Ovary (tissue), 10 donors: ENCODE measurements at regions of chr3 and their contacts with region 1.

Region 1: GRCh38 chr3:149512209-149512782 is 37.8 kb downstream of the TM4SF4 start:
- DNase-seq: peak; percentile 37 to 77 (median 62)
- H3K4me3 ChIP-seq: no peak overlapping the region
- H3K27ac ChIP-seq: no peak overlapping the region
- H3K4me1 ChIP-seq: peaks cover 5% of the 10 kb centered on the region
- H3K27me3 ChIP-seq: no peaks in the 10 kb centered on the region
- CTCF ChIP-seq: peak; percentile 63 to 80 (median 74)
- EP300 ChIP-seq: no peak
- POLR2A ChIP-seq: no peak

Region 2: DNA sequence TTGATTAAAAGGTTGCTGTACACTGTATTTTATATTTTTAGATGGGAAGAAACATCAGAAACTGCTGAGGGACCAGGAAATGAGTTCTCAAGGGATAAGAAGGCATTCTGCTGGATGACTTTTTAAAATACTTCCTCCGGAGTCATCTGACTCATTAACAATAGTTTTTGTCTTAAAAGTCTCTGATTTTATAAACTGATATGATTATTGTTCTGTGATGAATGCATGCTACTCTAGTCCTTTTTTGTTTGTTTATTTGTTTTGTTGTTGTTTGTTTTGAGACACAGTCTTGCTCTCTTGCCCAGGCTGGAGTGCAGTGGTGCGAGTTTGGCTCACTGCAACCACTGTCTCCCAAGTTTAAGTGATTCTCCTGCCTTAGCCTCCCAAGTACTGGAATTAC is 407.8 kb before region 1 on chr3:
- intact Hi-C with region 1: no loop called
- DNase-seq: no peak
- H3K4me3 ChIP-seq: no peak overlapping the region
- H3K27ac ChIP-seq: no peak overlapping the region
- H3K4me1 ChIP-seq: no peaks in the 10 kb centered on the region
- H3K27me3 ChIP-seq: no peaks in the 10 kb centered on the region
- CTCF ChIP-seq: no peak
- EP300 ChIP-seq: no peak
- POLR2A ChIP-seq: no peak

Region 3: DNA sequence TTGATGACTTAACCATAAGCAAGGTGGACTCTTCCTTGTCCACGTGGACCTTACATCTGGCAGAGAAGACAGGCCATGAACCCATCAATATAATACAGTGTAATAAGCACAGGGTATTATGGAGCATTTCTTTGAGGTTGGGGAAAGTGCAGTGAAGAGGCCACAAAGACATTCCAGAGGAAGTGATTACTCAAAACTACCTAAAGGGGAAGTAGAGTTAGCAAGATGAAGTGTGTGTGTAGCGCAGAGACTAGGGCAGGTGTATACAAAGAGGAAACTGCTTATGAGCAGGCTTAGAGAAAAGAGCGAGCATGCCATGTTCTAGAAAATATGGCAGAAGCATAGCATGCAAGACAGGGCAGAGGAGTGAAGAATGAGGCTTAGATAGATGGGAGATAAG is 308.5 kb before region 1 on chr3:
- intact Hi-C with region 1: no loop called
- DNase-seq: no peak
- H3K4me3 ChIP-seq: no peak overlapping the region
- H3K27ac ChIP-seq: no peak overlapping the region
- H3K4me1 ChIP-seq: no peaks in the 10 kb centered on the region
- H3K27me3 ChIP-seq: no peaks in the 10 kb centered on the region
- CTCF ChIP-seq: no peak
- EP300 ChIP-seq: no peak
- POLR2A ChIP-seq: no peak

Region 4: GRCh38 chr3:149765762-149766334 is 253.6 kb after region 1 on chr3:
- intact Hi-C with region 1: no loop called
- DNase-seq: no peak
- H3K4me3 ChIP-seq: no peak overlapping the region
- H3K27ac ChIP-seq: no peak overlapping the region
- H3K4me1 ChIP-seq: no peaks in the 10 kb centered on the region
- H3K27me3 ChIP-seq: no peaks in the 10 kb centered on the region
- CTCF ChIP-seq: peak in 1 of 3 donors; percentile 20
- EP300 ChIP-seq: no peak
- POLR2A ChIP-seq: no peak

Region 5: GRCh38 chr3:149860881-149861280 is 348.6 kb after region 1 on chr3:
- intact Hi-C with region 1: no loop called
- DNase-seq: no peak
- H3K4me3 ChIP-seq: no peak overlapping the region
- H3K27ac ChIP-seq: no peak overlapping the region
- H3K4me1 ChIP-seq: no peaks in the 10 kb centered on the region
- H3K27me3 ChIP-seq: no peaks in the 10 kb centered on the region
- CTCF ChIP-seq: no peak
- EP300 ChIP-seq: no peak
- POLR2A ChIP-seq: no peak

Region 6: GRCh38 chr3:149898771-149899170 is 386.5 kb after region 1 on chr3:
- intact Hi-C with region 1: loop called in 1 of 4 experiments (anchors 10 kb)
- DNase-seq: no peak
- H3K4me3 ChIP-seq: no peak overlapping the region
- H3K27ac ChIP-seq: no peak overlapping the region
- H3K4me1 ChIP-seq: no peaks in the 10 kb centered on the region
- H3K27me3 ChIP-seq: no peaks in the 10 kb centered on the region
- CTCF ChIP-seq: no peak
- EP300 ChIP-seq: no peak
- POLR2A ChIP-seq: no peak